ENCODE measurements at regions of chr2 and their contacts with region 1.

Region 1: DNA sequence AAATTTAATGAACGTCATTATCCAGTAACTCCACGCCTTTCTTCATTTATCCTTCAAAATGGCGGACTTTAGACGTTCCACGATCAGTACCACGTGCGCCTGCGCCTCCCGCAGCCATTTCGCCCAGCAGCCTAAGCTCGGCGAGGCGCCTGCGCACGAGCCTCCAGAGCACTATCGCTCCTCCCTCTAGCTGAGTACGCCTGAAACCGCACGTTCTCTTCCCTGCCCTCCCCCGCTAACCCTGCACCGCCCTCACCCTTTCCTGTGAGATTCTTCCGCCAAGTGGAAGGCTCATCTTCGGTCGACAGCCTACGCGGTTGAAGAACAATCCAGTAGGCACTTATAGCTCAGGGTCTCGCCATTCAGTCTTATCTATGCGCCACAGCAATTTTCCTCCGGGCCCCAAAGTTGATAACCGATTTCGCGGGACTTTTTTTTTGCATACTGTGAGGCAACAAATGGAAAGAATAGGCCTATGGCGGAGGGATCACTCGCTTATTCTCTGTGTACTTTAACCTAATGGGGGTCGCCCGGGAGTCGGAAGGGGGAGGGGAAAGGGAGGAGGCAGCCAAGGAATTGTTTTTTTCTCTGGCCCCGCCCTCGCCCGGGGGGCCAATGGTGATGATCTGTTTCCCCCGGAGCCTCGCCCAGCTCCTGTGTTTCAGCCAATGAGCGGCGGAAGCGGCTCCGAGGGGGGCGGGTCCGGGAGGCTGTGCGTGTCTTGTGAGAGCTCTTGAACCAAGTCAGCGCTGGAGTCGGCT is at the start of gene KDM3A:
- DNase-seq: peak; percentile 100
- ATAC-seq: peak; percentile 97
- H3K4me3 ChIP-seq: peak within 1 kb of the TSS; percentile 94 to 97
- H3K27ac ChIP-seq: peak within 1 kb of the TSS; percentile 95 to 99
- H3K4me1 ChIP-seq: peaks cover 5 to 12% of the 10 kb centered on the region in 2 donors
- H3K27me3 ChIP-seq: no peaks in the 10 kb centered on the region
- total RNA-seq, gene KDM3A: 44.9 to 75.3 TPM

Region 2: GRCh38 chr2:86037141-86037794 is 403.5 kb before region 1 on chr2:
- intact Hi-C with region 1: no loop called
- DNase-seq: peak; percentile 82 to 83
- ATAC-seq: peak; percentile 82
- H3K4me3 ChIP-seq: no peak overlapping the region
- H3K27ac ChIP-seq: peak overlapping the region; percentile 4 to 34
- H3K4me1 ChIP-seq: peaks cover 0 to 3% of the 10 kb centered on the region in 2 donors
- H3K27me3 ChIP-seq: no peaks in the 10 kb centered on the region

Region 3: DNA sequence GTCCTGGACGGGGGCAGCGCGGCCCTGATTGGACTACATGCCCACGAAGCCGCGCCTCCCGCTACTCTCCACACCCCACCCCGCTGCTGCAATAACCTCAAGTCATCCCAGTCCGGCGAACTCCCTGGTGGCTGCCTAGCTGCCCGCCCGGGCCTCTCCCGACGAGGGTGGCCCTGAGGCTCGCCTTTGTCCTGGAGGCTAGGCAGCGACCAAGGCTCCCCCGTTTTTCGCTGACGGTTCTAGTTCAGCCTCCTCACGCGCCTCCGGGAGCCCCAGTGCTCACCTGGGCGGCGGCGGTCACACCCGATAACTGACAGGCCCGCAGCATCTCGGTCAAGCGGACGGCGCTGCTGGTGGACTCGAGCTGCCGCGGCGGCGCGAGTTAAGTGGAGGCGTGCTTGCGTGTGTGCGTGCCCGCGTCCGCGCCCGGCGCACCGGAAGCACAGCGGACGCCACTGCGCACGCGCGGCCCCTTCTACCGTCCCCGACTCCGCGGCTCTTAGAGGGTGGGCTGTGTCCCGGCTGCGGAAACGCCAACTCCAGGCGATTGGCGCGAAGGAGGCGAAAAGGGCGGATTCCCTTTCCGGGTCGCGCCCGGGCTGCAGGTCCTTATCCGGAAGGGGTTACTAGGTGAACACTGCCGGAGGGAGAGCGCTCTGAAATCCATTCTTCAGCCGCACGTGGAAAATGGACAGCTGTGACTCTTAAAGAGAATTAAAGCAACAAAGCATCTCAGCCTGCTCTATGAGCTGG is 245.6 kb before region 1 on chr2 and contains the start of gene IMMT:
- intact Hi-C with region 1: loop called in 1 of 2 experiments (anchors 5 kb)
- DNase-seq: peak; percentile 98 to 99
- ATAC-seq: peak; percentile 96
- H3K4me3 ChIP-seq: peak within 1 kb of the TSS; percentile 68 to 80
- H3K27ac ChIP-seq: peak within 1 kb of the TSS; percentile 71 to 98
- H3K4me1 ChIP-seq: peaks cover 0 to 3% of the 10 kb centered on the region in 2 donors
- H3K27me3 ChIP-seq: no peaks in the 10 kb centered on the region
- total RNA-seq, gene IMMT: 68.4 to 81.2 TPM

Region 4: GRCh38 chr2:86480105-86480504 is 39.3 kb after region 1 on chr2:
- intact Hi-C with region 1: loop called in 1 of 2 experiments (anchors 5 kb)
- DNase-seq: peak in 1 of 2 donors; percentile 49
- ATAC-seq: no peak
- H3K4me3 ChIP-seq: no peak overlapping the region
- H3K27ac ChIP-seq: peak overlapping the region; percentile 3 to 76
- H3K4me1 ChIP-seq: peaks cover 13 to 16% of the 10 kb centered on the region in 2 donors
- H3K27me3 ChIP-seq: no peaks in the 10 kb centered on the region

Region 5: DNA sequence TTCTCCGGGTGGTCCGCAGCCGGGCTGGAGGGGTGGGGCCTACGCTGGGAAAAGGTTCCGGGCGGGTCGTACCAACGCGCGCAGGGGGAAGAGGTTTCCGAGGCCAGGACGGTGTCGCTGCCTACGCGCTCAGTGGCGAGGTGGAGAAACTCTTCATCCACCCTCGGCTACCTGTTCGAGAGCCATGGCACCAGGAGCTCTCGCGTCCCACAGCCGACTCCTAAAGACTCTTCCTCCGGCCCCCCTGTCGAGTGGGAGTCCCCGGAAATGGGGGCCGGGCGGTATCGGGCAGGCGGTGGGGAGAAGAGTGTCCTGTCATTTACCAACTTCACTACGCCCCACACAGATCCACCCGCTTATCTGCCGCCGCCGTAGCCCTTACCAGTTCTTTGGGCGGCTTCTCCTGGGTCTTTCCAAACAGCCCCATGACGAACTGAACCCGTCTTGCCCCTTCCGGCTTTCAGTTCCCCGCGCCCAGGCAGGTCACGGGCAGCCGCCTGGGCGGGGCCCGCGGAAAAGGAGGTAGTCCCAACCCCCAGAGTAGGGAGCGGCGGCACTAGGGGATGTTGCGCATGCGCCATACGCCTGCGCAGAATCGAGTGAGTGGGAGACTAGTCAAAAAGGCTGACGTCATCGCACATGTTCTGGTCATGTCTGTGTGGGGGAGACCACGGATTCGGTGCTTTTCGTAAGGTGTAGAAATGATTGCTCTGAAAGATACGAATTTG is 122.3 kb after region 1 on chr2 and contains the start of gene CHMP3:
- intact Hi-C with region 1: loop called in 1 of 2 experiments (anchors 5 kb)
- DNase-seq: peak; percentile 98 to 99
- ATAC-seq: peak; percentile 99
- H3K4me3 ChIP-seq: peak within 1 kb of the TSS; percentile 66 to 90
- H3K27ac ChIP-seq: peak within 1 kb of the TSS; percentile 83 to 97
- H3K4me1 ChIP-seq: peaks cover 0 to 6% of the 10 kb centered on the region in 2 donors
- H3K27me3 ChIP-seq: no peaks in the 10 kb centered on the region
- total RNA-seq, gene CHMP3: 137 to 154 TPM

Region 6: DNA sequence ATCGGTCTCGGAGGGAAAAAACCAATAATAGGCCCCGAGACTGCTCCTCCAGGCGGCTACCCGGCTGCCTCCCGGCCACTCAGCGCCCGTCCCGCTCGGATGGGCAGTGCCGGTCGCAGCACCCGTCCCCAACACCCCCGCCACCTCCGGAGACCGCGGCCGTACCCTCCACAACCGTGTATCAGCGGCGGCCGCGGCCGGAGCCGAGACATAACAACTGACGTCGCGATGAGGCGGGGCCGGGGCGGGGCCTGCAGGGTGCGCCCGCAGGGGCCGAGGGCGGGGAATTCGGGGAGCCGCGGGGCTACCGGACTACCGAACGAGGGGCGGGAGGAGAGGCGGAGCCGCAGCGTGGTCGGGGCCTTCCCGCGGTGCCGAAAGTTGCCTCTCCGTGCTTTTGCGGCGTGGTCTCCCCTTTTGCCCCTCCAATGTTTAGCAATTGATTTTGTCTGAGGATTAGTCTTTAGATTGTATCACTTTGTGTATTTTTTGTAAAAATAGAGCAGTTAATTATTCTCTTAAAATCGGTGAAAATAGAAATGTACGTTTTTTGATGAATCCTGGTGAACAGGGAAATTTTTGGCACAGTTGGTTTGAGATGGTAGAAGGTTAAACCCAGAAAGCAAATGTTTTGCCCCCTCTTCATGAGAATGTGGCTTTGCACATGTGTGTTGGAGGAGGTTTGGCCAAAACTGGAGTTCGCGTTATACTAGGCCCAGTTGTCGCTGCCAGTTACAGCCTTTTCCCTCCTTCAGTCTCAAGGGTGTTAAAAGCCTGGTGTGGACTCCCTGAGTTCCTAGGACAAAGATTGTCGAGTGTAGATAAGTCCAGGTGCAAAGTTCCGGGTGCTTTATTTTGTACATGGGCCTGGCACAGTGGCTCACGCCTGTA is 183.1 kb after region 1 on chr2 and contains the start of gene RNF103:
- intact Hi-C with region 1: loop called (anchors 2 to 5 kb)
- DNase-seq: peak; percentile 98 to 100
- ATAC-seq: peak; percentile 98
- H3K4me3 ChIP-seq: peak within 1 kb of the TSS; percentile 79 to 84
- H3K27ac ChIP-seq: peak within 1 kb of the TSS; percentile 88 to 94
- H3K4me1 ChIP-seq: peaks cover 0 to 2% of the 10 kb centered on the region in 2 donors
- H3K27me3 ChIP-seq: no peaks in the 10 kb centered on the region
- total RNA-seq, gene RNF103: 30.5 to 31.0 TPM